ENCODE measurements at regions of chr1 and their contacts with region 1.

Region 1: DNA sequence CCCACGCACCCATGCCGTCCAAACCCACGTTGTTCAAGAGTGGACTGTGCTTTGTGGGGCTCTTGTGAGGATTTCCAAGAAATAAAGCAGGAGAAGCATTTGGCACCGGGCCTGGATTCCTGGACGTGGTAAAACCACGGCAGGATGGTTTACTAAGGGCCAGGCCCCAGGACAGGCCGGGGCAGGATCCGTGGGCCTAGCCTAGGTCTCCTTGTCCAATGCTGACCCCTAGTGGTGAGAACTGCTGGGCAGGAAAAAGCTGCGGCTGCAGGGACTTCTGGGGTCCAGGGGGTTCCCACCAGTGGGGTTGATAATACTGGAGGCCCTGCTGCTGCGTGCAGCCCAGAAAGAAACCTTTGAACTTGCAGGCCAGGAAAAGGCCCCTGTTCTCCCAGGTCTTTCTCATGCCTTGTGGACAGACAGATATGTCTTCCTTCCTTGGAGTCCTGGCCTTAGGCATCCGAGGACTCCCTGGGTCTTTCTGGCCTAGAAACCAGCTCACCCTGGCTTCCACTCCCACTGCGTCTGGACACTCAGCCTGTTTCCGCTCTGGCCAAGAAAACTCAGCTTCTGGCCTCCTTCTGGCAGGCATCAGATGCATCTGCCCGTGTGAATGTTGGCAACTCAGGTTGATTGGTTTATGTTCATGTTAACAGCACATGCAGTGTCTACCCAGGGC is 106.9 kb upstream of the TMEM51 start:
- DNase-seq: peak; percentile 94
- H3K4me3 ChIP-seq: no peak overlapping the region; a peak in 1 of 4 replicates
- H3K27ac ChIP-seq: peak overlapping the region; percentile 29 to 31; a peak in 3 of 4 replicates
- H3K4me1 ChIP-seq: peaks cover 0 to 3% of the 10 kb centered on the region in 2 experiments; a peak in 1 of 4 replicates
- H3K27me3 ChIP-seq: no peaks in the 10 kb centered on the region
- CTCF ChIP-seq: peak; percentile 98
- EP300 ChIP-seq: no peak
- RAD21 ChIP-seq: peak; percentile 94

Region 2: DNA sequence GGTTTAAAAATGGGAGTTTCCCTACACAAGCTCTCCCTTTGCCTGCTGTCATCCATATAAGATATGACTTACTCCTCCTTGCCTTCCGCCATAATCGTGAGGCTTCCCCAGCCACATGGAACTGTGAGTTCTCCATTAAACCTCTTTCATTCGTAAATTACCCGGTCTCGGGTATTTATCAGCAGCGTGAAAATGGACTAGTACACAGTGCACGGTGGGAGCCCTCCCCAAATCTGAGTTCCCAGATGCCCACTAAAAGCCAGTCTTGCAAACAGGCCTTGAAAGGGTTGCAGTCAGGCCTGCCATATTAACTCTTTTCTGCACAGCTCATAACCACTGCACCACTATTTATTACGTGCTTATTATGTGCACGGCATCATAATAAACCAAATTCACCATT is 945.7 kb before region 1 on chr1:
- CTCF ChIA-PET with region 1: interaction called, 12 read pairs
- POLR2A ChIA-PET with region 1: no interaction called
- DNase-seq: no peak
- H3K4me3 ChIP-seq: no peak overlapping the region
- H3K27ac ChIP-seq: no peak overlapping the region
- H3K4me1 ChIP-seq: no peaks in the 10 kb centered on the region
- H3K27me3 ChIP-seq: no peaks in the 10 kb centered on the region
- CTCF ChIP-seq: no peak
- EP300 ChIP-seq: no peak
- RAD21 ChIP-seq: no peak

Region 3: GRCh38 chr1:14415395-14415794 is 631.2 kb before region 1 on chr1:
- CTCF ChIA-PET with region 1: no interaction called
- POLR2A ChIA-PET with region 1: no interaction called
- DNase-seq: peak; percentile 33
- H3K4me3 ChIP-seq: no peak overlapping the region
- H3K27ac ChIP-seq: no peak overlapping the region
- H3K4me1 ChIP-seq: no peaks in the 10 kb centered on the region
- H3K27me3 ChIP-seq: no peaks in the 10 kb centered on the region
- CTCF ChIP-seq: no peak
- EP300 ChIP-seq: no peak
- RAD21 ChIP-seq: peak; percentile 20; the same call in 1 of the 2 replicates

Region 4: DNA sequence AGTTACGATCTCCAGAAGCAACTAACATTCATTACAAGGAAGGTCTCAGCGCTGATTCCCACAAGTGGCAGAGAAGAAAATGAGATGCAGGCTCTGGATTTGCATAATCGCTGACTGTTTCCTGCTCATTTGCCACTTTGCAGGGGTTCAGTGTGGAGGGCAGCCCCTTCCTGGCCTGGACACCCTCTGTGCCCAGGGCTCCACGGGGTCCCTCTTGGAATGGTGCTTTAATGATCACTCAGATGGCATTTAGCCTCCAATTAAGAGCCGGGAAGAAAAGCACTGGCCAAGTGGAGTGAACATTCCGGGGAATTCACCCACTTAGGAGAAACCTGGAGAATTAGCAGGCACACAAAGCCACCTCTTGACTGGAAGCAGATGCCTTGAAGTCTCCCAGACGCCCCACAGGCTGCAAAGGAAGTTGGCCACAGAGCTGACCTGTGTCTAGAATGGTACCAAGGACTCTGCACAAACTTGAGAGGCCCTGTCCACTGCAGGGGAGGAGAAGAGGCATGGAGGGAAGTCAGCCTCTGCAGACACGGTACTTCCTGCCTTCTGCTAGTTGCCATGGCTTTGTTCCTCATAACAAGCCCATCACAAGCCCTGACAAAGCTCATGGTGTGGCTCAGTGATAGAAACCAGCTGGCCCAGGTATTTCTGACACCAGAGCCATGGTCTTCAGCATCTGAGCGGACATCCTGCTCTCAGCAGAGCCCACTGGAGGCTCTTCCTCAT is 290.9 kb before region 1 on chr1:
- CTCF ChIA-PET with region 1: no interaction called
- POLR2A ChIA-PET with region 1: no interaction called
- DNase-seq: no peak
- H3K4me3 ChIP-seq: no peak overlapping the region
- H3K27ac ChIP-seq: no peak overlapping the region
- H3K4me1 ChIP-seq: no peaks in the 10 kb centered on the region; a peak in 1 of 4 replicates
- H3K27me3 ChIP-seq: no peaks in the 10 kb centered on the region
- CTCF ChIP-seq: no peak
- EP300 ChIP-seq: no peak
- RAD21 ChIP-seq: no peak

Region 5: DNA sequence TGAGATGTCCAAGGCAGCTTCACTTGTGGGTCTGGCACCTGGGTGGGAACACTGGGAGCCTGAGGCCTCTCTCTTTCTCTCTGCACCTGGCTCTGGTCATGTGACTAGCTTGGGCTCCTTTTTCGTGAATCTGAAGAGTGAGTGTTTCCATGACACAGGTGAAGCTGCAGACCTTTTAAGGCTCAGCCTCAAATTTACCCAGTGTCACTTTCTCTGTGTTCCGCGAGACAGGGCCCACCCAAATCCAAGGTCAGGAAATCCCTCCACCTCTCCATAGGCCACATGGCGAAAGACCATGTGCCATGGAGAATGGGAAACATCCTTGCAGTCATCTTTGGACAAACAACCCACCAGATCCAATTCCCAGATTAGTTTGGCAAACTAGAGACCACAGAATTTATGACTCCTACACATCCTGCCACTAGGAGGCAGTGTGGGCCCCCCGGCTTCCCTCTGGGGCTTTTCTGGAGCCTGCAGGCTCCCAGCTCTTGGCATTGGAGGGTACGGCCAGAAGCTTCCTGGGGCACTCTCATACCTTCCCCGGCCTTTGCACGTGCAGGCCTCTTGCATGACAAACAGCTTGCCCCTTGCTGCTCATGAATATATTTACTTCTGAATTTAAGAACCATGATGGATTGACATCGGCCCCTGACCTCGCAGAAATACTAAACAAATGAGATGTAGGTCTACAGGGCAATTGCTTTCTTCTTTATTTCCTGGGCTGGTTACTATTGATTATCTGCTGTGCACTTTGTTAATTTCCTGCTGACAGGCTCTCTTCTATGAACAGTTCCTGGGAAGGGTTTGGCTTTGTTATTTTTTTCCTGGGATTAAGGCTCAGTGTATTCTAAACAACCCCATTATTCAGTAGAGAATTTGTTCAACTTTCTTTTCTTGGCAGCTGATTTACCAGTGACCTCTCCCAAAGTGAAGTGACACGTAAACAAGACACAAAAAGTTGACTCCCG is 267.4 kb before region 1 on chr1:
- CTCF ChIA-PET with region 1: interaction called, 11 read pairs
- POLR2A ChIA-PET with region 1: no interaction called
- DNase-seq: peak; percentile 55
- H3K4me3 ChIP-seq: no peak overlapping the region; a peak in 1 of 4 replicates
- H3K27ac ChIP-seq: no peak overlapping the region
- H3K4me1 ChIP-seq: peaks cover 0 to 2% of the 10 kb centered on the region in 2 experiments; a peak in 1 of 4 replicates
- H3K27me3 ChIP-seq: no peaks in the 10 kb centered on the region
- CTCF ChIP-seq: peak; percentile 67
- EP300 ChIP-seq: no peak
- RAD21 ChIP-seq: peak; percentile 53

Region 6: DNA sequence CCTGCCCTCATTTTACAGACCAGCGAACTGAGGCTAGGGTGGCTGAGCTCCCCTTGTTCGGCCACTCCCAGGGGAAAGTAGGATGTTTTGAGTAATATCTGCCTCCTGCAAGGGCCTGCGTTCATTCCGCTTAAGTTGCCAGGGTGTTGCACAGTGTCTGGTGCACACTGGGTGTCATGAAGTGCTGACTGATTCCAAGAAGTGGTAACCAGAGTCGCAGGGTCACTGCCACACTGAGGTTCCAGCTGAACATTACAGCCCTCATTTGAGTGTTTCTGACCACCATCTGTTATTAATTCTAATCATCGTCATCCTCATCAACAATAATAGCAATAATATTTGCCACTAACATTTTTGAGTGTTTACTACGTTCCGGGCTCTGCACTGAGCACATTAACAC is 197.6 kb before region 1 on chr1:
- CTCF ChIA-PET with region 1: no interaction called
- POLR2A ChIA-PET with region 1: no interaction called
- DNase-seq: no peak
- H3K4me3 ChIP-seq: no peak overlapping the region
- H3K27ac ChIP-seq: no peak overlapping the region
- H3K4me1 ChIP-seq: peaks cover 0 to 5% of the 10 kb centered on the region in 2 experiments; a peak in 1 of 4 replicates
- H3K27me3 ChIP-seq: no peaks in the 10 kb centered on the region
- CTCF ChIP-seq: no peak
- EP300 ChIP-seq: no peak
- RAD21 ChIP-seq: no peak

Region 7: GRCh38 chr1:15056515-15057285 is 10.1 kb after region 1 on chr1:
- CTCF ChIA-PET with region 1: interaction called, 22 read pairs
- POLR2A ChIA-PET with region 1: no interaction called
- DNase-seq: peak; percentile 44
- H3K4me3 ChIP-seq: no peak overlapping the region
- H3K27ac ChIP-seq: no peak overlapping the region
- H3K4me1 ChIP-seq: no peaks in the 10 kb centered on the region; a peak in 1 of 4 replicates
- H3K27me3 ChIP-seq: no peaks in the 10 kb centered on the region
- CTCF ChIP-seq: no peak
- EP300 ChIP-seq: no peak
- RAD21 ChIP-seq: no peak

Region 8: GRCh38 chr1:15100121-15100874 is 53.7 kb after region 1 on chr1:
- CTCF ChIA-PET with region 1: interaction called, 12 read pairs
- POLR2A ChIA-PET with region 1: no interaction called
- DNase-seq: peak; percentile 81
- H3K4me3 ChIP-seq: no peak overlapping the region; a peak in 1 of 4 replicates
- H3K27ac ChIP-seq: no peak overlapping the region
- H3K4me1 ChIP-seq: peaks cover 0 to 4% of the 10 kb centered on the region in 2 experiments; a peak in 1 of 4 replicates
- H3K27me3 ChIP-seq: no peaks in the 10 kb centered on the region
- CTCF ChIP-seq: peak; percentile 88
- EP300 ChIP-seq: no peak
- RAD21 ChIP-seq: peak; percentile 92